ENCODE measurements at regions of chr11 and their contacts with region 1.

Region 1: DNA sequence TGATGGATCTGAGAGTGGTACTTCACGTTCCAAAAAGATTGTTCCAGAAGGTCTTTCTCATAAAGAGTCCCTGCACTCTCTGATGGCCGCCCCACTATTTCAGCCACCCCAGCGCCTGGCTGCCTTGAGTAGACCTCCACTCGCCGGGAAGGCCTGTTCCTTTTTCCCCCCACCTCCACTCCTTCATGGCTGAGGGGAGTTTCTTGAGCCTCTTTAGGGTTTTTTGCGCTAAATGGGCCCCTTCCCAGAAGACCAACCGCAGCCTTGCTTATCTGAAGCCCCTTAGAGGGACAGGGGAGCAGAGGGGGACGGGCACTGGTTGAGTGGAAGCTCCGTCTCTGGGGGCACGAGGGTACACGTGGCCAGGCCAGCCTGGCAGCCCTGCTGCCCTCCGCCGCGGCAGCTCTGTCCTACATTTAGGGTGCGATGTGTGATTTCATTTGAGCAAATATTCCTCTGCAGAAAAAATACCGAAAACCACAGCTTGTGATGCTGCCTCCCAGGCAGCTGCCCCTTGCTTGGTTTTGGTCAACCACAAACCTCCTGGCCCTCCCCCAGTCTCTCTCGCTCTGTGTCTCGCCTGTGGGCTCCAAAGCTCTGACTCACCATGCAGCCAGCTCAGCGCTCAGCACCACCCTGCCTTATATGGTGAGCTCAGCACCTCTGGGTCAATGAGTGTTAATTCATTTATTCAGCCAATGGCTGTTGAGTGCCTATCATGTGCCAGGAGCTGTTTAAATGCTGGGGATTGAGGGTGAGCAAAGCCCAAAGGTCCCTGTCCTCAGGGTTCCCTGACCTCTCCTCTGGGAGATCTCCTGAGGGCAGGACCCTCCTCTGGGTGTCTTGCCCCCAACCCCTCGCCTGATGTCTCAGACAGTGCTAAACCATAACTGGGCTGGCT is 88.6 kb downstream of the TP53I11 start:
- DNase-seq: peak; percentile 77 to 94
- H3K4me3 ChIP-seq: no peak overlapping the region
- H3K27ac ChIP-seq: peak overlapping the region; percentile 94 to 95
- H3K4me1 ChIP-seq: peaks cover 7 to 15% of the 10 kb centered on the region in 2 donors
- H3K27me3 ChIP-seq: no peaks in the 10 kb centered on the region
- CTCF ChIP-seq: no peak

Region 2: DNA sequence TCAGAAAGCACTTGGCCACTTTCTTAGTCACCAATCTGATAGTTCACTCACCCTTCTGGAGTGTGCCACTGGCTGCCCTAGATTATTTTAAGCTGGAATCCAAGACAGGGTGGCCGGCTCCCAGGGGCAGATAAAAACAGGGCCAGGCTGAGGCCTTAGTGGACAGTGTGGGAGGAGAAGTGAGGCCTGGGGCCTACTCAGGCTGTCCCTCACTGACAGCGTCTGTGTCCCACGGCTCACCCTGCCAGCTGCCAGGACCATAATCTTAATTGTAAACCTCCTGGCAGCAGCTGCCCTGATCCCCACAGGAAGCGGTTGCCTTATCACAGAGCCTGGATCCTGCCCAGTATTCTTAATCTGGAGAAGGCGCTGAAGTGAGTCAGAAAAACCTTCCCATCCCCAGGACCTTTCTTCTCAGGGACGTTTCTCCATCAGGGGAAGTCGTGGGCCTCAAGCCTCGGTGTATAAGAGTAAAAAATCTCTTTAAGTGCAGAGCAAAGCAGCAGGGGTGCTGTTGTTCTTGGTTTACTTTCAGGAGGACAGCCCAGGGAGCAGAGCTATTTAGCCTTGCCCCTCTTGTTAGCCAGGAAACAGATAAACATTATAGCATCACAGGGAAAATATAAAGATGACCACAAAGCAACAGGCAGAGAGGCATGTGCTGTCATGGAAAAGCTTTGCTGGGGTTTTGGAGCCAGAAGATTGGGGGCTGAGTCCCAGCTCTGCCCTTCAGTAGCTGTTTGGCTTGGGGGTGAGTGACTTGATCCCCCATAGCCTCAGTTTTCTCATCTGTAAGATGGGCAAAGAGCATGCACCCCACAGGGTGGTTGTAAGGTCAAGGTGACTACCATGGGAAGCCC is 95.8 kb before region 1 on chr11:
- intact Hi-C with region 1: loop called (anchors 5 kb)
- DNase-seq: peak; percentile 25 to 85
- H3K4me3 ChIP-seq: no peak overlapping the region
- H3K27ac ChIP-seq: peak overlapping the region; percentile 90 to 91
- H3K4me1 ChIP-seq: peaks cover 9 to 36% of the 10 kb centered on the region in 2 donors
- H3K27me3 ChIP-seq: no peaks in the 10 kb centered on the region
- CTCF ChIP-seq: no peak

Region 3: DNA sequence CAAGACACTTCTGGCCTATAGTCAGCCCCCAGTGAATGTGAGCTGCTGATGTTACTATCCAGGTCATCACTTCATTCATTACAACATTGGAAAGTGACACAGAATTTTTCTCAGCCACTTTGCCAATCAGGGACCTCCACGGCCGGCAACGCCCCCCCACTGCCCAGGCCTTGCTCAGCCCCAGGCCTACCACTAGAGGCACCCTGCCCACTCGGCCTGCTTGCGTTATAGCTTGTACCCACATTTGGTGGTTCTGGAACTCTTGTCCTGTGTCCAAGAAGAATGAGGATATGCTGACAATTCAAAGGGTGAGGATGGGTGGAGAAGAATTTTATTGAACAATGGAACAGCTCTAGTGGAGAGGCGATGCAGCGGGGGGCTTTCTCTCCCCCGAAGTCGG is 39.1 kb before region 1 on chr11:
- intact Hi-C with region 1: no loop called
- DNase-seq: no peak
- H3K4me3 ChIP-seq: no peak overlapping the region
- H3K27ac ChIP-seq: no peak overlapping the region
- H3K4me1 ChIP-seq: no peaks in the 10 kb centered on the region
- H3K27me3 ChIP-seq: no peaks in the 10 kb centered on the region
- CTCF ChIP-seq: no peak

Region 4: DNA sequence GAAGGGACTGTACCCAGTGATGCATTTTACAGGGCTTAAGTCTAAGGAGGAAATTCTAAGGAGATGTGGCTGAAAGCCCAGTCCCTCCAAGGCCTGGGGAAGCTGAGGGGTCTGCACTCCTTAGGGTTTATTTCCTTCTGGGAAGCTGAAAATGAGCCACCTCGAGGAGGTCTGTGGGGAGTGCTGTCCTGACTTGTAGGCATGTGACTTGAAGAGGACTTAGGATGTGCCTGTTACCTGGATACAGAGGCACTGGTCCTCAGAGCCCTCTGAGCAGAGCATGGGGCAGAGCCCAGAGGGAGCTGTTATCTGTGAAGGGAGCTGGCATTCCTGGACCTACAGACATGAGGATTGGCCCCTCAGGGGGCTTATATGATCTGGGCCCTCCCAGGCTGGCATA is 11.4 kb after region 1 on chr11:
- intact Hi-C with region 1: loop called (anchors 2 kb)
- DNase-seq: no peak
- H3K4me3 ChIP-seq: no peak overlapping the region
- H3K27ac ChIP-seq: no peak overlapping the region
- H3K4me1 ChIP-seq: no peaks in the 10 kb centered on the region
- H3K27me3 ChIP-seq: no peaks in the 10 kb centered on the region
- CTCF ChIP-seq: no peak

Region 5: DNA sequence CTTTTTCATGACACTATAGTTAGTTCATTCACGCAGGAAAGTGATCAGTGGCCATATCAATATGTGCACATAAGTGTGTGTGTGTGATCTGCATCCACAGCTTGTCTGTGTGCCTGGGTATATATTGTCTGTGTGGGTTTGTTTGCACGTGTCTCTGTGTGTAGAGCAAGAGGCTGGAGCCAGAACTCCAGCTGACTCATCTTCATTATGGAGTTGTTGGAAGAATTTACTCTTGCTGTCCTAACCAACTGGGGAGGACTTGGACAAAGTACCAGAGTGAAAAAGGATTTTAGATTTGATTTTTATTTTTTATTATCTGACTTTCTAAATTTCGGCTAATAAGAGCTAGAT is 24.7 kb after region 1 on chr11:
- intact Hi-C with region 1: no loop called
- DNase-seq: no peak
- H3K4me3 ChIP-seq: no peak overlapping the region
- H3K27ac ChIP-seq: no peak overlapping the region
- H3K4me1 ChIP-seq: no peaks in the 10 kb centered on the region
- H3K27me3 ChIP-seq: no peaks in the 10 kb centered on the region
- CTCF ChIP-seq: no peak

Measured in ascending aorta (tissue), 2 donors.